ENCODE measurements at regions of chr15 and their contacts with region 1.

Region 1: GRCh38 chr15:78108299-78109084 is 16.1 kb downstream of the SH2D7 start:
- DNase-seq: peak; percentile 89
- H3K4me3 Mint-ChIP-seq: no peak overlapping the region
- H3K27ac Mint-ChIP-seq: no peak overlapping the region
- H3K4me1 Mint-ChIP-seq: peaks cover 21% of the 10 kb centered on the region
- H3K27me3 Mint-ChIP-seq: no peaks in the 10 kb centered on the region

Region 2: GRCh38 chr15:77819841-77820728 is 288.4 kb before region 1 on chr15:
- CTCF ChIA-PET with region 1: no interaction called
- intact Hi-C with region 1: no loop called
- DNase-seq: peak; percentile 18
- H3K4me3 Mint-ChIP-seq: no peak overlapping the region
- H3K27ac Mint-ChIP-seq: no peak overlapping the region
- H3K4me1 Mint-ChIP-seq: no peaks in the 10 kb centered on the region
- H3K27me3 Mint-ChIP-seq: peaks cover 40% of the 10 kb centered on the region

Region 3: DNA sequence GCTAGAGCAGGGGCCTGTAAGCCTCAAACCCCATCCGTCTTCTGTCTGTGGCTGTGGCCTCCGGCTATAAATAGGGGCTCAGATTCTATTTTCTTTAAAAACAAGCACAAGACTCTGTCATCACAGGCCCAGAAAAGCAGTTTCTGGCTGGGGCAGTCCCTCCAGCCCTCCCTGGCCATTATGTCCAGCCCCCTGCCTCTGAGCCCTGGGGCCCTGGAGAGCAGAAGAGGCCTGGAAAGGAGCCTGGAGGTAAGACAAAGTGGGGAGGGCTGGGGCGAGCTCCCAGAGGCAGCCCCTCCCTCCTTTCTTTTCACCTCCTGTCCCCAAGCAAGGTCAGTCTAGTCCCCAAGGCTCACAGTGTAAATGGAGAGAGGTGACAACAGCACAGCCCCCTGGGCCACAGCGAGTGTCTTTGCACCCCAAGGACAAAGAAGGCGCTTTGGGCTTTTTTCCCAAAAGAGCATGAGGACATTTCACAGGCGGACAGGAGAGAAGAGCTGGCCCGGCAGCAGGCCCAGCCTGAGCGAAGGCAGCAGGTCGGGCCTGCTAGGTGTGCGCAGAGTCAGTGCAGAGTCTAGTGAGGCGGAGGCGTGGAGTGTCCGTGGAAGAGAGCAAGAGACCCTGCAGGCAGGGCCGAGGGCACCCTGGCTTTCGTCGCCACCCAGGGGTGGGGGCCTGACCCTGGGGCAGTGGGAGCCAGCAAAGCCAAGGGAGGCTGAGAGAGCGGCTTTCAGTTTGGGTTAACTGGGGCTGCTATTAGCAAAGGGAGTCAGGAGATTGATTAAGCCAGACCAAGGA is 219.3 kb before region 1 on chr15:
- CTCF ChIA-PET with region 1: no interaction called
- intact Hi-C with region 1: no loop called
- DNase-seq: no peak
- H3K4me3 Mint-ChIP-seq: no peak overlapping the region
- H3K27ac Mint-ChIP-seq: no peak overlapping the region
- H3K4me1 Mint-ChIP-seq: no peaks in the 10 kb centered on the region
- H3K27me3 Mint-ChIP-seq: peaks cover 3% of the 10 kb centered on the region

Region 4: DNA sequence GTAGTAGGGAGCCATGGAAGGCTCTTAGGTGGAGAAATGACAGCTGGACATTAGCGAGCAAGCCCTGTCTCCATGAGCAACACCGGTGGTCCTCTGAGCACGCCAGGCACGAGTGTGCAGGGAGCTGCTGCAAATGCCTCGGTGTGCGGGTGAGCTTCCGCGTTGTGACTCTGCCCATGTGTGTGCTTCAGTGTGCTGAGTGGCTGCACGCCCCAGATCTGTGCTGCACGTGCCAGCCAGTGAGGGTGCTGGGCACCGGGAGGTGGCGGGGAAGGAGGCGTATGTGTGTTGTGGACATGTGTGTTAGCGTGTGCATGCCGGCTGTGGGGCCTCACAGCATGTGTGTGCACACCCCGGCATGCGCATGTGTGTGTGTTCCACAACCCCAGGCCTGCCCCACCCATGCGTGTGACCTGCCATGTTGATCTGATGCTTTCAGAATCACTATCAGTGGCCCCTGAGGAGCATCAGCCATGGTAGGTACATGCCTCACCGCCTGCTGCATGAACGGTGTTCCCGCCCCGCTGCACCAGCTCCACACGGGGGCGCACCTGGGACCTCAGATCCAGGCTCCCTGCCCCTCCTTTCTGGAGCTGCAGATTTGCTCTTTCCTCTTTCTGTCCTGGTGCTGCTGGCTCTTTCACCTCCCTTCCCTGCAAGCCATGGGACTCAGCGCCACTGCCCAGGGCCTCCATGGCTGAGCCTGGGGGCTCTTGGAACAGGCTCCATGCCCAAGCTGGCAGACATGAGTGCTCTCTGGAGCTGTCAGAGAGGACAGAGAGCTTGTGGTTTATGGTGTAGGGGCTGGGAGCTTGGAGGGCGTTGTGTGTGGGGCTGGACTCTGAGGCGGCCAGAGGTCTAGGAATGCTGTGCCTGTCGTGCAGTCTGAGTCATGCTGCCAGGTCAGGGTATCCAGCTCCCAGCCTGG is 200.4 kb before region 1 on chr15:
- CTCF ChIA-PET with region 1: interaction called, 5 read pairs
- intact Hi-C with region 1: loop called (anchors 5 kb)
- DNase-seq: peak; percentile 81
- H3K4me3 Mint-ChIP-seq: no peak overlapping the region
- H3K27ac Mint-ChIP-seq: no peak overlapping the region
- H3K4me1 Mint-ChIP-seq: peaks cover 2% of the 10 kb centered on the region
- H3K27me3 Mint-ChIP-seq: no peaks in the 10 kb centered on the region

Region 5: DNA sequence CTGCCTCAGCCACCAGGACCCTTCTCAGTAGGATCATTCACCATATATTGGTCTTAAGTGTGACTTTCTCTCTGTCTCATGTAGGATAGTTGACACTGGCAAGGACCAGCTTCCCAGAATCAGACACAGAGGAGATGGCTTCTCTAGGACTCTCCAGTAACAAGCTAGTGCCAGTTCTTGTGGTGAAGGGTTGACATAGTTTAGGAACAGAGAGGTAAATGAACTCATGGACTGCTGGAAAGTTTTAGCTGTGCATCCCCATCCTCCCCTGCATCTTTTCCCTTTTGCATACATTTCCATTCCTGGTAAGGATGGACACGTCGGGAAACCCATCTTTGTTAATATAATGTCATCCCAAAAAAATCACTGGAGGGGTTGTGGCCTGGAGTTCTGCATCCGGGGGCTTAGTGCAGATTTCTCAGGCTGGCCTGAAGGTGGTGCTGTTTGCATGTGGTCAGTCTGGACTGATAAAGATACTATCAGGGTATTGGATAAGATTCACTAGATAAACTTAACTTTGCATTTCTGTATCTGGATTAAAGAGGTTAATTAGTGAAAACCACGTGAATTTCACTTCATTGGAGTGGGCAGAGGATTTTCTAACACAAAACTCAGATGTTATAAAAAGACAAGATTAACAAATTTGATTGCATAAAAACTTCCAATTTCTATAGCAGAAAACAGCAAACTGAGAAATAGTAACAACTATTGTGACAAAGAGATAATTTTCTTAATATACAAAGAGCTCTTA is 141.8 kb before region 1 on chr15:
- CTCF ChIA-PET with region 1: interaction called, 115 read pairs
- intact Hi-C with region 1: loop called (anchors 1 kb)
- DNase-seq: peak; percentile 76
- H3K4me3 Mint-ChIP-seq: no peak overlapping the region
- H3K27ac Mint-ChIP-seq: no peak overlapping the region
- H3K4me1 Mint-ChIP-seq: no peaks in the 10 kb centered on the region
- H3K27me3 Mint-ChIP-seq: no peaks in the 10 kb centered on the region

Region 6: DNA sequence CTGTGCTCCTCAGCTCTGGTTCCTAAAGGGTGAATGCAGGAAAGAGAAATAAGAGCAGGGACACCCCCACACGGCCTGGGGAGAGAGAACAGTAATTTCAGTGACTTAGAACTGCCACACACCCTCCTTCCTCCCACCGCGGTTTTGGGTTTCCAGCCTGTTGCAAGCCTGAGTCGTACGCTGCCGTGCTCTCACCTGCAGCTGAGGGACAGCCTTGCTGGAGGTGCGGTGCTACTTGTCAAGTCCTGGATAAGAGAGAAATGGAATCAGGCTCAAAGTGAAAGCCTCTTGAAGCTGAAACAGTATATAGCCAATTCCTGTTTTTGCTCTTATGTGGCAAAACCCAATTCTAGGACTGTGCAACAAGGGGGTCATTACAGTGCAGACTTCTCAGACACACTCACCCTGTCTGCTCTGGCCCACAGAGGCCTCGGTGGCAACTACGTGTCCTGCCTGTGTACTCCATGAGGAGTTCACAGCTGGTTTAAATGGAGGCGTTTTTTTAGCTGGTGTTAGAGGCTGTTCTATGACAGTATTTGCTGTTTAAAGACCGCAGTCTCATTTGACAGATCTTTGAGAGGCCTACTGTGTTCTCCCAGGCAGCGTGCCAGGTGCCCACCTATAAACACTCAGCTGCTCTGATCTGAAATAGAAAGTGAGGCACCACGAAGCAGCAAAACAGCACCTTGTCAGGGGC is 73.8 kb before region 1 on chr15:
- CTCF ChIA-PET with region 1: interaction called, 9 read pairs
- intact Hi-C with region 1: loop called (anchors 2 kb)
- DNase-seq: peak; percentile 97
- H3K4me3 Mint-ChIP-seq: peak overlapping the region; percentile 38
- H3K27ac Mint-ChIP-seq: peak overlapping the region; percentile 65
- H3K4me1 Mint-ChIP-seq: peaks cover 78% of the 10 kb centered on the region
- H3K27me3 Mint-ChIP-seq: no peaks in the 10 kb centered on the region

Region 7: DNA sequence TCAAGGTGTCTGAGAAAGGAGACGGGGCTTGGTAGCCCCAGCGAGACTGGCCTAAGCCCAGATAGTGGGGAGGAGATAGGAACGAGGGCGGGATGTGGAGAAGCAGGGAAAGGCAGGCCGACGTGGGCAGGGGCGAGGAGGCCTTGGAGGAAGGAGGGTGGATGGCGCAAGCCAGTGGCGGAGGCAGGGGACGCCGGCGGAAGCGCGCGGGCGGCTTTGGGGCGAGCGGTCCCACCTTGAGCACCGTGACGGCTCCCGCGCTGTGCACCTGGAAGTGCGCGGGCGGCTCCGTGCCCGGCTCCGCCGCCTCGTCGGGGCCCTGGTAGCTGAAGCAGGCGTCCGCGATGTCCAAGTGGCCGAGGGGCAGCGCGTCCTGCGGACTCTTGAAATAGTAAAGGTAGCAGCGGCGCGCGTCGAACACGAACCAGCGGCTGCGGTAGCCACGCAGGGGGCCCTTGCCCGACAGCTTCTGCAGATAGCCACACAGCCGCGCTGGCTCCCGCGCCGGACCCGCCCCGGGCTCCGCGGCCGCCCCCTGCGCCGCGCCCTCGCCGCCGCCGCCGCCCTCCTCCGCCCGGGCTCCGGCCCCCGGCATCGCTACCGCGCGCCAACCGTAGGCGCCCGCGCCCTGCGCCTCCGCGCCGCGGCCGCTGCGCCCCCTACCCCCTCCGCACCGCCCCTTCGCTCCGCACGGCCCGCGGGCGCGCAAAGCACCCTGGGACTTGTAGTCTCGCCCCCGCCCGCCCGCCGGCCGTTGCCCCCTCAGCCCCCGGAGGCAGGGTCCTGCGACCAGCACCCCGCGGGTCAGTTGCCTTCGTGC is 31.2 kb before region 1 on chr15 and contains the start of gene TBC1D2B:
- CTCF ChIA-PET with region 1: interaction called, 6 read pairs
- intact Hi-C with region 1: loop called (anchors 2 kb)
- DNase-seq: peak; percentile 74
- H3K4me3 Mint-ChIP-seq: peak within 1 kb of the TSS; percentile 100
- H3K27ac Mint-ChIP-seq: peak within 1 kb of the TSS; percentile 95
- H3K4me1 Mint-ChIP-seq: peaks cover 39% of the 10 kb centered on the region
- H3K27me3 Mint-ChIP-seq: no peaks in the 10 kb centered on the region
- total RNA-seq, gene TBC1D2B: 57.1 to 60.3 TPM

Region 8: GRCh38 chr15:78195735-78196201 is 87.3 kb after region 1 on chr15:
- CTCF ChIA-PET with region 1: interaction called, 80 read pairs
- intact Hi-C with region 1: loop called (anchors 1 kb)
- DNase-seq: peak; percentile 63
- H3K4me3 Mint-ChIP-seq: no peak overlapping the region
- H3K27ac Mint-ChIP-seq: no peak overlapping the region
- H3K4me1 Mint-ChIP-seq: no peaks in the 10 kb centered on the region
- H3K27me3 Mint-ChIP-seq: no peaks in the 10 kb centered on the region